ENCODE measurements at regions of chr19 and their contacts with region 1.

Region 1: DNA sequence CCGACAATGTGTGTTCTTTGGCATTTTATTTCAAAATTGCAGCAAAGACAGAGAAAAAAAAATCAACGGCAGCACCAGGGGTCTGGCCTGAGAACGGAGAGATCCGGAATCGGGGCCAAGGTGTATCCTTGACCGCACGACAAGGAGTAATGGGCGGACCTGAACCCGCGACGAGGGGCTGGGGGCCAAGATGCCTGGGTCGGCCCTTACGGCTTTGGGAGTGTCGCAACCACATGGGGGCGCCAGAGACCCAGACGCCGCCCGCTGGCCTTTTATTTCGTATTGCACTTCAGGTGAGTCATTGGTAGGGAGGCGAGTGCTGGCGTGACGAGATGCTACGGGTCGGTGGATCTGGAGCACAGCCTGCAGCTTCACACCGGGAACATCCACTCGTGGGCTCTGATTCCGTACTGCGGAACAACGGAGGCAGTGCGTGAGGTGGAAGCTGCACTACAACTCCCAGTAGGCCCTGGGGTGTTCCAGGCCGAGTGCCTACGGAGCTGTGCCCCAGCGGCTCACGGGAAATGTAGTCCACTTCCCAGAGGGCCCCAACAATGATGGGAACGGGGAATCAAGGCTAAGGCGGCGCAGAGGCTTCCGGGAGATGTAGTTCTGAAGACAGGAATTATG is 15.7 kb downstream of the BCAT2 start:
- DNase-seq: peak; percentile 66
- H3K4me3 ChIP-seq: peak overlapping the region; percentile 27 to 66 (median 46)
- H3K27ac ChIP-seq: peak overlapping the region; percentile 81 to 90 (median 88)
- H3K4me1 ChIP-seq: peaks cover 6 to 37% (median 10%) of the 10 kb centered on the region in 3 donors
- H3K27me3 ChIP-seq: no peaks in the 10 kb centered on the region
- CTCF ChIP-seq: peak; percentile 93 to 98 (median 97)
- POLR2A ChIP-seq: no peak

Region 2: DNA sequence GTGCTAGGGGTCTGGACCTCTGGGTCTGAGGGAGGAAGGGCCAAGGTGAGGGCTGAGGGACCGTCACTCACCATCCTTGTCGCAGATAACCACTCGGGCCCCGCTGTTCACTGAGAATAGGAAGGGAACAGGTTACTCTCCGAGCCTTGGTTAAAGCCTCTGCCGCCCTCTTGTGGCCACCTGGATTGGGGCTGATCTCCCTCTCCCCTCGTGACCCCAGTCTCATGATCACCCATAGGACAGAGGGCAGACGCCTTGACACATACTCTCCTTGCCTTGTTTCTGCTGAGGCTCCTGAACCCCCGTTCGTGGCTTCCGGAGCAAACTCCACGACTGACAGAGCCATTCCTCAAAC is 40.5 kb after region 1 on chr19:
- intact Hi-C with region 1: loop called (anchors 2 kb)
- DNase-seq: peak; percentile 51
- H3K4me3 ChIP-seq: peak overlapping the region; percentile 2 to 62 (median 40)
- H3K27ac ChIP-seq: peak overlapping the region; percentile 58 to 89 (median 82)
- H3K4me1 ChIP-seq: peaks cover 0 to 25% (median 2%) of the 10 kb centered on the region in 3 donors
- H3K27me3 ChIP-seq: no peaks in the 10 kb centered on the region
- CTCF ChIP-seq: peak; percentile 90 to 97 (median 94)
- POLR2A ChIP-seq: peak in 1 of 4 donors; percentile 36

Measured in esophagus squamous epithelium (tissue), 5 donors.